ENCODE measurements at regions of chr18 and their contacts with region 1.

Region 1: GRCh38 chr18:50266248-50266704 is at the start of gene CFAP53:
- DNase-seq: peak; percentile 92
- ATAC-seq: peak; percentile 93
- H3K4me3 Mint-ChIP-seq: peak within 1 kb of the TSS; percentile 71
- H3K27ac Mint-ChIP-seq: peak within 1 kb of the TSS; percentile 57
- H3K4me1 Mint-ChIP-seq: peaks cover 20% of the 10 kb centered on the region
- H3K27me3 Mint-ChIP-seq: no peaks in the 10 kb centered on the region
- total RNA-seq, gene CFAP53: 0.37 to 0.44 TPM

Region 2: DNA sequence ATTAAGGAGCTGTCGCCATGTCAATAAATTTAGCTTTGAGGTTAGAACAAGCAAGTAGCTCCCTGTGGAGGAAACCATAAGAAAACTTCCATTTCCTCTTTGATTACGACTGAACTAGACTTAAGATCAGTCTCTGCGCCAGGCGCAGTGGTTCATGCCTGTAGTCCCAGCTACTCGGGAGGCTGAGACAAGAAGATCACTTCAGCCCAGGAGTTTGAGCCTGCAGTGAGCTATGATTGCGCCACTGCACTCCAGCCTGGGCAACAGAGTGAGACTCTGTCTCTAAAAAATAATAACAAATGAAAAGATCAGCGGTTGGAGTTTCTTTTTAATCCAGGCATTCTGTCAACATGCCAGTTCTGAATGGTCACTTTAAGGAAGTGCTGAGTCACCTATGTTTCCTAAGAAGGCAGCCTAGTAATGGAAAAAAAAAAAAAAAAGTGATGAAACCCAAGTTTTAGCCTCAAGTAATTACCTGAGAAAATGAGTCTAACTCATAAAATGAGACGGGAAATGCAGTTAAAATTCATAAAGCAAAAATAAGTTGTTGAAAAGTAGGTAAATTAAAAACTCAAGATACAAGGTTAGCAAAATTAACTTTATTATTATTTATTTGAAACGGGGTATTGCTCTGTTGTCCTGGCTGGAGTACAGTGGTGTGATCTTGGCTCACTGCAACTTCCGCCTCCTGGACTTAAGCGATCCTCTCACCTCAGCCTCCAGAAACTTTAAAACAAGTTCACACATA is 789.4 kb before region 1 on chr18:
- CTCF ChIA-PET with region 1: no interaction called
- POLR2A ChIA-PET with region 1: no interaction called
- intact Hi-C with region 1: no loop called
- DNase-seq: peak; percentile 14
- ATAC-seq: peak; percentile 23
- H3K4me3 Mint-ChIP-seq: no peak overlapping the region
- H3K27ac Mint-ChIP-seq: peak overlapping the region; percentile 21
- H3K4me1 Mint-ChIP-seq: peaks cover 15% of the 10 kb centered on the region
- H3K27me3 Mint-ChIP-seq: no peaks in the 10 kb centered on the region

Region 3: DNA sequence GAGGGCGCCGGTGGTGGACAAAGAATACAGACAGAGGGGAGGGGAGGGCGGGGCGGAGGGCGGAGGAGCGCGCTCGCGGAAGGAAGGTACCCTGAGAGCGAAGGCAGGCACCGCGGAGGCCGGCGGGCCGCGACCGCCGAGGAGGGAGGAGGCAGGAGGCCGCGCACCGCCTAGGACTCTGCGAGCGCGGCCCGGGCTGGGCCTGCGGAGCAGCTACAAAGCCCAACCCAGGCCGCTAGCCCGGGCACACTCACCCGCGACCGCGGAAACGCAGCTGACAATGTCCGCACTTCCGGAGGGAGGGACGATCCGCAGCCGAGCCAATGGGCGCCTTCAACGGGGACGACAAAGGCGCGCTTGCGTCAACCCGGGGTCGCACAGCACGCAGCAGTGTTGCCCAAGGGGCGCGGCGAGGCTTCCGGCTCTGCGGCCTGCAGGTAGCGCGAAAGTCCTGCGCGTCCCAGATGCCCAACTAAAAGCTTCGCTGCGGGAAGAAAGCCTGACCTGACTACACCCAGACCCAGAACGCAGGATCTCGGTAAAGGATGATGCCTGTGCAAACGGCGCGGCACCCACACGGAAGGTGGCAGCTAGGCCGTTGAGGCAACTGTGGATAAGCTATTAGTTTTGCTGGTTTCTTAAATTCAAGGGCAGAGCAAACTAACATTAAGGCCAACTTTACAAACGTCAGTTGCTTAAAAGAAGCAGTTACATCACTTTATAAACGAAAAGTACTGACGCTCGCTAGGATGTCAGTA is 779.1 kb before region 1 on chr18 and contains the start of gene C18orf32:
- CTCF ChIA-PET with region 1: no interaction called
- POLR2A ChIA-PET with region 1: no interaction called
- intact Hi-C with region 1: loop called in 1 of 2 experiments (anchors 5 kb)
- DNase-seq: peak; percentile 96
- ATAC-seq: peak; percentile 92
- H3K4me3 Mint-ChIP-seq: peak within 1 kb of the TSS; percentile 95
- H3K27ac Mint-ChIP-seq: peak within 1 kb of the TSS; percentile 100
- H3K4me1 Mint-ChIP-seq: peaks cover 60% of the 10 kb centered on the region
- H3K27me3 Mint-ChIP-seq: no peaks in the 10 kb centered on the region
- total RNA-seq, gene C18orf32: 12.7 to 20.0 TPM

Region 4: DNA sequence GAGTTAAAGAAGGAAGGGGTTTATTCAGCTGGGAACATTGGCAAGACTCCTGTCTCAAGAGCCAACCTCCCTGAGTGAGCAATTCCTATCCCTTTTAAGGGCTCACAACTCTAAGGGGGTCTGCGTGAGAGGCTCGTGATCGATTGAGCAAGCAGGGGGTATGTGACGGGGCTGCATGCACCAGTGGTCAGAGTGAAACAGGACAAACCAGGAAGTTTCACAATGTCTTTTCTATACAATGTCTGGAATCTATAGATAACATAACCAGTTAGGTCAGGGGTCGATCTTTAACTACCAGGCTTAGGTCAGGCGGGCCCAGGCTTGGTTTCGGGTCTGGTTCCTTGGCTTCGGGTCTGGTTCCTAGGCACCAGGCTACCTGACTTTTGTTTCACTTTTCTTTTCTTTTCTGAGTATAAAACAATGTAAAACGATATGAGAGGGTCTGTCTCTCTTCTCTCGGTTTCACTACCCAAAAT is 734.6 kb before region 1 on chr18:
- CTCF ChIA-PET with region 1: no interaction called
- POLR2A ChIA-PET with region 1: no interaction called
- intact Hi-C with region 1: no loop called
- DNase-seq: no peak
- ATAC-seq: no peak
- H3K4me3 Mint-ChIP-seq: no peak overlapping the region
- H3K27ac Mint-ChIP-seq: no peak overlapping the region
- H3K4me1 Mint-ChIP-seq: no peaks in the 10 kb centered on the region
- H3K27me3 Mint-ChIP-seq: peaks cover 7% of the 10 kb centered on the region

Region 5: DNA sequence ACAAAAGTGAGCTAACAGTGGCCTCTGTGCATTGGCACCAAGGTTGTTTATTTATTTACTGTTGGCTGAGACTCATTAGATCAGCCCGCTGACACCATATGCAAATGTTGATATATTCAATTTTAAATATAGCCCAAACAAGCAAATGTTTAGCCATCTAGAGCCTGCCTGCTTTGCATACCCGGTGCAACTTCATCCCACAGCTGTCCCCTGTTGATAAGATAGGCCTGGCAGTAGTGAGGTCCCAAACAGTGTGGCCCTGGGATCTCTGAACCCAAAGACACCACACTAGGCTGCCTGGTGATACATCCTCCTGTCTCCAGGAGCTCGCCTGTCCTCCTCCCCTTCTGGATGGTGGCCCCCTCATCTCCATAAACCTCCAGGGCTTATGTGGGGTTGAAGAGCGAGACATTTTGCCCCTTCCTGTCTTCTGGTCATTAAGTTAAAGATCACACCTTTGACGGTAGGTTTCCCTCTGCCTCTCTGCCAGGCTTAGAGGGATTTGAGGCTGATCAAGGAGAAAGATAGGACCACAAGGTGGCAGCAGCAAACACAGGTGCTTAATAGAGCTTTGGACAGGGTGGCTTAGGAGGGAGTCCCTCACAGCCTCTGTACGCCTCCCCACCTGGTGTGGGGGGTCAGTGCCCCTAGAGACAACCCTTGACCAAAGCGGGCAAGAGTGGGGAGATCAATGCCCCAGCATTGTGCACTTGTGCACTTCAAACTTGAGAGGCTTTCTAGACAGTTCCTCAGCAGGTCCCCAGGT is 47.7 kb before region 1 on chr18:
- CTCF ChIA-PET with region 1: interaction called, 6 read pairs
- POLR2A ChIA-PET with region 1: no interaction called
- intact Hi-C with region 1: loop called in 1 of 2 experiments (anchors 1 kb)
- DNase-seq: peak; percentile 57
- ATAC-seq: peak; percentile 55
- H3K4me3 Mint-ChIP-seq: no peak overlapping the region
- H3K27ac Mint-ChIP-seq: no peak overlapping the region
- H3K4me1 Mint-ChIP-seq: no peaks in the 10 kb centered on the region
- H3K27me3 Mint-ChIP-seq: peaks cover 19% of the 10 kb centered on the region

Region 6: GRCh38 chr18:50281295-50281971 is 15.2 kb after region 1 on chr18 and contains the start of gene MBD1:
- CTCF ChIA-PET with region 1: interaction called, 7 read pairs
- POLR2A ChIA-PET with region 1: interaction called, 6 read pairs
- intact Hi-C with region 1: loop called (anchors 1 kb)
- DNase-seq: peak; percentile 97
- ATAC-seq: peak; percentile 91
- H3K4me3 Mint-ChIP-seq: peak within 1 kb of the TSS; percentile 91
- H3K27ac Mint-ChIP-seq: peak within 1 kb of the TSS; percentile 79
- H3K4me1 Mint-ChIP-seq: peaks cover 35% of the 10 kb centered on the region
- H3K27me3 Mint-ChIP-seq: no peaks in the 10 kb centered on the region
- total RNA-seq, gene MBD1: 62.2 to 70.5 TPM

Region 7: GRCh38 chr18:50307738-50308470 is 41.6 kb after region 1 on chr18:
- CTCF ChIA-PET with region 1: no interaction called
- POLR2A ChIA-PET with region 1: no interaction called
- intact Hi-C with region 1: loop called in 1 of 2 experiments (anchors 1 kb)
- DNase-seq: peak; percentile 95
- ATAC-seq: peak; percentile 99
- H3K4me3 Mint-ChIP-seq: peak overlapping the region; percentile 73
- H3K27ac Mint-ChIP-seq: peak overlapping the region; percentile 37
- H3K4me1 Mint-ChIP-seq: peaks cover 11% of the 10 kb centered on the region
- H3K27me3 Mint-ChIP-seq: peaks cover 3% of the 10 kb centered on the region

Region 8: GRCh38 chr18:50374753-50375391 is 108.6 kb after region 1 on chr18 and contains the start of gene SKA1:
- CTCF ChIA-PET with region 1: interaction called, 4 read pairs
- POLR2A ChIA-PET with region 1: no interaction called
- intact Hi-C with region 1: loop called in 1 of 2 experiments (anchors 1 kb)
- DNase-seq: peak; percentile 96
- ATAC-seq: peak; percentile 99
- H3K4me3 Mint-ChIP-seq: peak within 1 kb of the TSS; percentile 83
- H3K27ac Mint-ChIP-seq: peak within 1 kb of the TSS; percentile 79
- H3K4me1 Mint-ChIP-seq: peaks cover 2% of the 10 kb centered on the region
- H3K27me3 Mint-ChIP-seq: peaks cover under 1% of the 10 kb centered on the region
- total RNA-seq, gene SKA1: 38.6 to 48.3 TPM

Measured in activated CD4-positive, alpha-beta T cell treated with anti-CD3 and anti-CD28 coated beads for 36 hours (primary cell).